Activated naive CD4-positive, alpha-beta T cell treated with anti-CD3 and anti-CD28 coated beads for 36 hours (primary cell): ENCODE measurements at regions of chr10 and their contacts with region 1.

Region 1: GRCh38 chr10:112532189-112532588 is 85.2 kb downstream of the VTI1A start:
- DNase-seq: peak; percentile 20
- H3K4me3 Mint-ChIP-seq: no peak overlapping the region
- H3K27ac Mint-ChIP-seq: no peak overlapping the region
- H3K4me1 Mint-ChIP-seq: peaks cover 28% of the 10 kb centered on the region
- H3K27me3 Mint-ChIP-seq: no peaks in the 10 kb centered on the region

Region 2: DNA sequence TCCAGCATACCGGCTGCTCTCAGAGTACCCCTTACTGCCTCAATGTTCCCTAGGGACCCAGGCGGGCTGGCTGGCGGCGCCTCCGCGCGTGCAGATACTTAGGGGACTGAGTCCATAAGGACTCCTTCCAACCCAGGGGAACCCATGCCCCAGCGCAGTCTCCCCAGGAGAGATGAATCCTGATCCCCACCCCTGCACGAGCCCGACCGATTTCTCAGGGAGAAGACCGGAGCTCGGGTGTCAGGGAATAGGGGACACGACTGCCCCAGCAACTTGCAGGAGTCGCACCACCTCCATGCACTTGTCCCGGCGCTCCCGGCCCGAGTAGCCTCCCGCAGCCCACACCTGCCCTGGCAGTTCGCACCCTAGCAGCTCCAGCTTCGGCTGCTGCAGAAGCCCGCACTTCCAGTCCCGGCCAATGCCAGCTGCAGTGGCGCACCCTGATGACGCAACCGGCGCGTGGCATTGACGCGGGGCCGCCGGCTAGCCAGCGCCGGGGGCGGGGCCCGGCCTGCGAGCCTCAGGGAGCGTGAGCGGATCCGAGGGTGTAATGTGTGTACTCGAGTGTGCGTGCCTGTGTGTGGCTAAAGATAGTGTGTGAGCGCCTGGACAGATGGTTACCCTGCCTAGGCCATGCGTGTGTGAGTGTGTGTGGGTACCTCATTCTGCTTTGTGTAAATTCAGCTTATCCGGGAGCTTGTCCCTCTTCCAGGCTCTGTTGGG is 348.7 kb before region 1 on chr10 and contains the start of gene GPAM:
- CTCF ChIA-PET with region 1: no interaction called
- intact Hi-C with region 1: no loop called
- DNase-seq: peak; percentile 97
- H3K4me3 Mint-ChIP-seq: peak within 1 kb of the TSS; percentile 85
- H3K27ac Mint-ChIP-seq: peak within 1 kb of the TSS; percentile 74
- H3K4me1 Mint-ChIP-seq: peaks cover 20% of the 10 kb centered on the region
- H3K27me3 Mint-ChIP-seq: no peaks in the 10 kb centered on the region
- total RNA-seq, gene GPAM: 7.3 to 8.1 TPM

Region 3: GRCh38 chr10:112375721-112376395 is 156.3 kb before region 1 on chr10:
- CTCF ChIA-PET with region 1: no interaction called
- intact Hi-C with region 1: loop called (anchors 5 kb)
- DNase-seq: peak; percentile 49
- H3K4me3 Mint-ChIP-seq: peak overlapping the region; percentile 97
- H3K27ac Mint-ChIP-seq: peak overlapping the region; percentile 99
- H3K4me1 Mint-ChIP-seq: peaks cover 55% of the 10 kb centered on the region
- H3K27me3 Mint-ChIP-seq: no peaks in the 10 kb centered on the region

Region 4: GRCh38 chr10:112519129-112519761 is 12.9 kb before region 1 on chr10:
- CTCF ChIA-PET with region 1: interaction called, 4 read pairs
- intact Hi-C with region 1: loop called (anchors 1 kb)
- DNase-seq: peak; percentile 41
- H3K4me3 Mint-ChIP-seq: no peak overlapping the region
- H3K27ac Mint-ChIP-seq: no peak overlapping the region
- H3K4me1 Mint-ChIP-seq: peaks cover 14% of the 10 kb centered on the region
- H3K27me3 Mint-ChIP-seq: no peaks in the 10 kb centered on the region

Region 5: DNA sequence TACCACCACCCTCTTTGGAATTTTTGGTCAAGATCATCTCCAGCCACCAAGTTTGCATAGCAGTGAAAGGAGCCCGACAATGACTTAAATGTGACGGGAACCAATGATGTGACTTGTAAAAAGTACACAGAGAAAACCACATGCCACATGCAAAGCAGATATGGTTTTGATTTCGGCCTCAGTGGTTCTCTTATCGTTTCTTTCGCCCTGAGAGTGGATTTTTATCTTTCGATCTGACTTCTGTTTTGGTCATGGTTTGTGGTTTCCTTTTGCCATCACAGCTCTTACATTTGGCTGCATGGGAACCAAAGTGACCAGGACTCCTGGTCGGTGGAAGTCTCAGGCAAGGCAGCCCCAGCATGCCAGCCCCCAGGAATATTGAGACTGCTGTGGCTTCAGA is 449.4 kb after region 1 on chr10:
- CTCF ChIA-PET with region 1: no interaction called
- intact Hi-C with region 1: loop called (anchors 5 kb)
- DNase-seq: peak; percentile 73
- H3K4me3 Mint-ChIP-seq: no peak overlapping the region
- H3K27ac Mint-ChIP-seq: no peak overlapping the region
- H3K4me1 Mint-ChIP-seq: peaks cover 24% of the 10 kb centered on the region
- H3K27me3 Mint-ChIP-seq: peaks cover 61% of the 10 kb centered on the region

Region 6: GRCh38 chr10:113093188-113094113 is 561.3 kb after region 1 on chr10:
- CTCF ChIA-PET with region 1: no interaction called
- intact Hi-C with region 1: loop called (anchors 5 kb)
- DNase-seq: no peak
- H3K4me3 Mint-ChIP-seq: no peak overlapping the region
- H3K27ac Mint-ChIP-seq: peak overlapping the region; percentile 4
- H3K4me1 Mint-ChIP-seq: peaks cover 23% of the 10 kb centered on the region
- H3K27me3 Mint-ChIP-seq: no peaks in the 10 kb centered on the region